Activated naive CD4-positive, alpha-beta T cell treated with anti-CD3 and anti-CD28 coated beads for 36 hours (primary cell): ENCODE measurements at regions of chr2 and their contacts with region 1.

Region 1: GRCh38 chr2:69914170-69914960 is 544 bp upstream of the MXD1 start:
- DNase-seq: peak; percentile 100
- H3K4me3 Mint-ChIP-seq: peak overlapping the region; percentile 83
- H3K27ac Mint-ChIP-seq: peak overlapping the region; percentile 87
- H3K4me1 Mint-ChIP-seq: peaks cover 36% of the 10 kb centered on the region
- H3K27me3 Mint-ChIP-seq: no peaks in the 10 kb centered on the region

Region 2: DNA sequence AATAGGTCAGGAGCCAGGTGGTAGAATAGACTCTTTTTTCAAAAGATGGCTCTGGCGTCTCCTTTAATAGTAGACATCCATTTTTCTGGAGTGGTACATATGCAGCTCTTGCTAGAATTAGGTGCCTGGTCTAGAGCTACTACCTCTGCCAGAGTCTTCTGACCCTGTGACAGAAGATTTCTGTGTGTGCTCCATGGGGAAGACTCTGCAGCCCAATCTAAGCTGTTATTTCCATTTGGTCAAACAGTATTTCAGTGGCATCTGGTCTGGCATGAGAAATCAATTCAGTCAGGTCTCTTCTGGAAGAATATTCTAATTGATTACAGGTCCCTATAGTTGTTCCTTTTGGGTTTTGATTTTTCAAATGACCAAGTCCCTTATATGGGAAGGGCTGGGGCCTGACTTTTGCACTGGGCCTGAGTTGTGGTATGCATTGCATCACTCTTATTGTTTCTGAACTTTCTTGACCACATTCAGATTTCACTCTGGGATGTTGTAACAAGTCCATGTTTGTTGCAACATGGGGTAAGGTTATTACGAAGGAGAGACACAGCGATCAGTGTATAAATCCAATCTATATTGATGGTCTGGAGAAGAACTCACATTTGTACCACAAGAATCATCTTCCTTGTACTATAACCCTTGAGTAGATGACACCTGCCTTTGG is 12.6 kb after region 1 on chr2:
- CTCF ChIA-PET with region 1: interaction called, 26 read pairs
- intact Hi-C with region 1: loop called (anchors 1 kb)
- DNase-seq: no peak
- H3K4me3 Mint-ChIP-seq: no peak overlapping the region
- H3K27ac Mint-ChIP-seq: no peak overlapping the region
- H3K4me1 Mint-ChIP-seq: peaks cover 25% of the 10 kb centered on the region
- H3K27me3 Mint-ChIP-seq: no peaks in the 10 kb centered on the region

Region 3: GRCh38 chr2:69946351-69947077 is 32.1 kb after region 1 on chr2:
- CTCF ChIA-PET with region 1: no interaction called
- intact Hi-C with region 1: loop called (anchors 1 kb)
- DNase-seq: peak; percentile 78
- H3K4me3 Mint-ChIP-seq: no peak overlapping the region
- H3K27ac Mint-ChIP-seq: peak overlapping the region; percentile 60
- H3K4me1 Mint-ChIP-seq: peaks cover 28% of the 10 kb centered on the region
- H3K27me3 Mint-ChIP-seq: no peaks in the 10 kb centered on the region

Region 4: GRCh38 chr2:69973335-69973735 is 59.0 kb after region 1 on chr2:
- CTCF ChIA-PET with region 1: no interaction called
- intact Hi-C with region 1: no loop called
- DNase-seq: no peak
- H3K4me3 Mint-ChIP-seq: no peak overlapping the region
- H3K27ac Mint-ChIP-seq: no peak overlapping the region
- H3K4me1 Mint-ChIP-seq: peaks cover 12% of the 10 kb centered on the region
- H3K27me3 Mint-ChIP-seq: no peaks in the 10 kb centered on the region

Region 5: DNA sequence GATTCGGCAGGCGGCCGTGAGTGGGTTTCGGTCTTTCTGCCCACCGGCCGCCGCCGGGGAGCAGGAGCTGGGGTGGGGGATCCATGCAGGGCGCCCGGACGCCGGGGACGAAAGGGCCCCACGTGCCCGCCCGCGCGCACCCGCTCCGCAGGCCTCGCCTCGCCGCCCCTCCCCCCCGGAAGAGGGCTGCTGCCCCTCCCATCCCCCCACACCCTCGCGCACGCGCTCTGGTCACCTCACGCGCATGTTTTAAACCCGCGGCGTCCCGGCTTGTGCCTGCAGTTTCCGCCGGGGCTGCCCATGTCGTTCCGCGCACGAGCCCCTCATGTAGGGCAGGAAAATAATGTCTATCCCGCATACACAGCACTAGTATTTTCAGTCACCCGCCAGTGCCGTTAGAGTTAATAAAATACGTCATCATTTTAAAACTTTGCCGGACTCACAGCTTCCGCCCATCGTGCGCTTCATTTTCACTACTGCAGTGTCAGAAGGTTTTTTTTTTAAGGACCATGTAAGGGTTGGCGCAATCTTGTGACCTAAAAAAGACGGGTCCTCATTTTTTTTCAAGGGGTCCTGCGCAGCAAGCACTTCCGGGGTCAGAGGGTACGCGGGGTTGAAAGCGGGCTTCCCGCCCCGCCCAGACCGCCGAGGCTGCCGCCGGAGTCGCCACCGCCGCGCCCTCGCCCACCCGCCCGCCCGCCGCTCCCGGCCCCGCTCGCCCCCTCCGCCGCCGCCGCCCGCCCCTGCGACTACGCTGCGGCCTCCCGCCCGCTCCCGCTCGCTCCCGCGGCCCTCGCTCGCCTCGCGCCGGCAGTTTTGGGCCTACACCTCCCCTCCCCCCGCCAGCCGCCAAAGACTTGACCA is 172.7 kb after region 1 on chr2 and contains the start of gene PCBP1:
- CTCF ChIA-PET with region 1: interaction called, 11 read pairs
- intact Hi-C with region 1: loop called (anchors 1 kb)
- DNase-seq: peak; percentile 96
- H3K4me3 Mint-ChIP-seq: peak within 1 kb of the TSS; percentile 97
- H3K27ac Mint-ChIP-seq: peak within 1 kb of the TSS; percentile 100
- H3K4me1 Mint-ChIP-seq: peaks cover 50% of the 10 kb centered on the region
- H3K27me3 Mint-ChIP-seq: no peaks in the 10 kb centered on the region
- total RNA-seq, gene PCBP1: 363 to 374 TPM

Region 6: DNA sequence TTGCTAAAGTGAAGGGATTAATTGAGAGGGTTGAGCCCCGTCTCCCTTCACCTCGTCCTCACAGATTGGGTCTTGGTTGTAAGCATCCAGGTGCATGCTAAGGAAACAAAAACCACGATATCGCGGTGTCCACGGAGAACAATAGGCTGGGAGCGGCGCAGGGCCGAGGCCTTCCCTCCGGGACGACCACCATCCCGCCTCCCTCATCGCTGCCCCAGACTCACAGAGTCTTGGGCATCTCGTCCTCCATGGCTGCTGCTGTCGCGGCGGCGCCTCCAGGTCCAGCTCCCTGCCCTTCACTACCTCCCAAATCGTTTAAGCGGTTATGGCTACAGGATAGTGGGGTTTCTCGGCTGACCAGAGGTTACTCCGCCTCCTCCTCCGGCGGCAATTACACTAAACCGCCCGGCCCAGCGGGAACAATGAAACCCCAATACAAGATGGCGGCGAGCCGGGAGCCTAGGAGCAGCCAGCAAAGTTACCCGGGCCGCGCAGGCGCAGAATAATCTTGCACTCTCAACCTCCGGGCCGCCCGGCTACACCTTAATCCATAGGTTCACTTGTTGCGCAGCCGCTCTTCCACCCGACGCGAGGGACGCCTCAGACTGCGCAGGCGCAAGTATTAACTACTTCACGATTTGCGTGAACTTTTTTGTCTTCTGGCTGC is 333.9 kb after region 1 on chr2 and contains the start of gene TIA1:
- CTCF ChIA-PET with region 1: interaction called, 3 read pairs
- intact Hi-C with region 1: loop called (anchors 1 kb)
- DNase-seq: peak; percentile 99
- H3K4me3 Mint-ChIP-seq: peak within 1 kb of the TSS; percentile 99
- H3K27ac Mint-ChIP-seq: peak within 1 kb of the TSS; percentile 98
- H3K4me1 Mint-ChIP-seq: peaks cover 32% of the 10 kb centered on the region
- H3K27me3 Mint-ChIP-seq: no peaks in the 10 kb centered on the region
- total RNA-seq, gene TIA1: 83.2 to 83.9 TPM